ENCODE measurements at regions of chr3 and their contacts with region 1.

Region 1: GRCh38 chr3:100590114-100590839 is 19.1 kb upstream of the ADGRG7 start:
- DNase-seq: peak; percentile 54
- H3K4me3 Mint-ChIP-seq: peak overlapping the region; percentile 1
- H3K27ac Mint-ChIP-seq: no peak overlapping the region
- H3K4me1 Mint-ChIP-seq: peaks cover 6% of the 10 kb centered on the region
- H3K27me3 Mint-ChIP-seq: peaks cover 7% of the 10 kb centered on the region

Region 2: GRCh38 chr3:99833617-99834205 is 756.6 kb before region 1 on chr3:
- intact Hi-C with region 1: loop called (anchors 5 kb)
- DNase-seq: no peak
- H3K4me3 Mint-ChIP-seq: no peak overlapping the region
- H3K27ac Mint-ChIP-seq: no peak overlapping the region
- H3K4me1 Mint-ChIP-seq: peaks cover 26% of the 10 kb centered on the region
- H3K27me3 Mint-ChIP-seq: no peaks in the 10 kb centered on the region